ENCODE measurements at regions of chr1 and their contacts with region 1.

Region 1: DNA sequence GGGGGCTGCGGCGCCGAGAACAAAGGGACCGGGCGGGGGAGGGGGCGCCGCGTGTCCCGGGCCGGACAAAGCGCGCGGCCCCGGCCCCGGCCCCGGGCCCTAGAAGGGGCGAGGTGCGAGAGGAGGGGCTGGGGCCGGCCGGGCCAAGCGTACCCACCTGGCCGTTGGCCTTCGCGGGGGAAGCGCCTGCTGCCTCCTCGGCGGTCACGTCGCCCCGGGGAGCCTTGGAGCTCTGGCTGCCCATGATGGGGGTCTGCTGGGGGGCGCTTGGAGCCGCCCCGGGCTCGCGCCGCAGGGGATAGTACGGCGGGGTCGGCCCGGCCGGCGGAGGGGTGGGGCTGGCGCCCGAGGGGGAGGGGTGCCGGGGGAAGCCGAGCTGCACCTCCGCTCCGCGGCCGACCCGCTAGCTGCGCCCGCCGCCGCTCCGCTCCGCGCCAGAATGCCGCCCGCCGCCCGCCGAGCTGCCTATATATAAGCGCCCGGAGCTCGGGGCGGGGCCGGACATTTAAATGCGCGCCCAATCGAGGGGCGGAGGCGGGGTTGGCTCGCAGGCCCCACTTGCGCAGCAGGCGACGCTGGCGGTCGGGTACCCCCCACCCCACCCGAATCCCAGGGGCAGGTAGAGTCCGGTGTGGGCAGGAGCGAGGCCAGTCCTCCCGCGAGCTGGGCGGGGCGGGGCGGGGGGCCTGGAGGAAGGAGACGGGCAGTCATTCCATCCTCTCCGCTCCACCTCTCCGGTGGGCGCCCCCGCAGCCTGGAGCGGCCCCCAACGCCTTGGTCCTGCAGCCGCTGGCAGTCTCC is at the start of gene MARCKSL1:
- DNase-seq: peak; percentile 67 to 91 (median 84)
- ATAC-seq: peak; percentile 60 to 74 (median 72)
- H3K4me3 ChIP-seq: peak within 1 kb of the TSS; percentile 47 to 75
- H3K4me3 Mint-ChIP-seq: peak within 1 kb of the TSS; percentile 83 to 89 (median 86)
- H3K27ac ChIP-seq: peak within 1 kb of the TSS; percentile 41
- H3K27ac Mint-ChIP-seq: peak within 1 kb of the TSS; percentile 84 to 91
- H3K4me1 ChIP-seq: peaks cover 16 to 36% of the 10 kb centered on the region in 2 experiments
- H3K4me1 Mint-ChIP-seq: peaks cover 31 to 43% (median 35%) of the 10 kb centered on the region in 3 donors
- H3K27me3 ChIP-seq: peaks cover 0 to 5% of the 10 kb centered on the region in 2 experiments
- H3K27me3 Mint-ChIP-seq: no peaks in the 10 kb centered on the region
- total RNA-seq, gene MARCKSL1: 28.1 to 46.5 (median 41.4) TPM

Region 2: GRCh38 chr1:31447198-31447597 is 888.8 kb before region 1 on chr1:
- CTCF ChIA-PET with region 1: no interaction called
- POLR2A ChIA-PET with region 1: no interaction called
- DNase-seq: no peak
- ATAC-seq: no peak
- H3K4me3 ChIP-seq: no peak overlapping the region
- H3K4me3 Mint-ChIP-seq: no peak overlapping the region
- H3K27ac ChIP-seq: no peak overlapping the region
- H3K27ac Mint-ChIP-seq: no peak overlapping the region
- H3K4me1 ChIP-seq: no peaks in the 10 kb centered on the region
- H3K4me1 Mint-ChIP-seq: no peaks in the 10 kb centered on the region
- H3K27me3 ChIP-seq: peaks cover 0 to 2% of the 10 kb centered on the region in 2 experiments
- H3K27me3 Mint-ChIP-seq: peaks cover 16 to 18% of the 10 kb centered on the region in 2 donors

Region 3: DNA sequence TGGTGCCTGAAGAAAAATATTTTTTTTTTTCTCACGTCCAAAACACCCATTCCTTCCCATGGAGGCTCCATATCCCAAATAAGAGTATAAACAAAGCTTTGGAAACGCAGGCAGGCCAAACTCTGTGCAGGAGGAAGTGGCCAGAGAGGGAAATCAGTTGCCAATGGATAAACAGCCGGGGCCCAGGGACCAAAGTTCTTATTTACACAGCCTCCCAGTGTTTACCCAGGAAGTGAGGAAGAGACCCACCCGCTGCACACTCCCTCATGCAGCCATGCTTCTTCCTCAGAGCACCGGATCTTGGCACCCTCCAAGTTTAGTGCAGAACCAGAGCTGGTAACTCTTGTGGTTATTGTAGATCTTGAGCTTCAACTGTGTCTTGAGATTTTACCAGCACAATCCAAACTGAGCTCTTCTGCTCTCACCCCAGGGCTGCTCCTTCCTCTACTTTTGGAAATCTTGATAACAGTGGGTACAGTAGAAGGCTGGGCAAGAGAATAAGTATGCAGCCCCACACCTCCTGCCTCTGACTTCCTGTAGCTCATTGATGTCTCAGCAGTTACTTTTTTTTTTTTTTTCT is 14.2 kb before region 1 on chr1:
- CTCF ChIA-PET with region 1: interaction called in 1 of 2 experiments, 9 read pairs
- POLR2A ChIA-PET with region 1: interaction called in 1 of 2 experiments, 12 read pairs
- DNase-seq: peak in 23 of 35 experiments; percentile 8 to 68 (median 29)
- ATAC-seq: peak; percentile 86 to 90 (median 88)
- H3K4me3 ChIP-seq: peak overlapping the region; percentile 10 to 46
- H3K4me3 Mint-ChIP-seq: peak overlapping the region; percentile 64 to 78 (median 67)
- H3K27ac ChIP-seq: peak overlapping the region; percentile 61
- H3K27ac Mint-ChIP-seq: peak overlapping the region; percentile 96
- H3K4me1 ChIP-seq: peaks cover 29 to 58% of the 10 kb centered on the region in 2 experiments
- H3K4me1 Mint-ChIP-seq: peaks cover 44 to 59% (median 44%) of the 10 kb centered on the region in 3 donors
- H3K27me3 ChIP-seq: no peaks in the 10 kb centered on the region
- H3K27me3 Mint-ChIP-seq: no peaks in the 10 kb centered on the region

Region 4: DNA sequence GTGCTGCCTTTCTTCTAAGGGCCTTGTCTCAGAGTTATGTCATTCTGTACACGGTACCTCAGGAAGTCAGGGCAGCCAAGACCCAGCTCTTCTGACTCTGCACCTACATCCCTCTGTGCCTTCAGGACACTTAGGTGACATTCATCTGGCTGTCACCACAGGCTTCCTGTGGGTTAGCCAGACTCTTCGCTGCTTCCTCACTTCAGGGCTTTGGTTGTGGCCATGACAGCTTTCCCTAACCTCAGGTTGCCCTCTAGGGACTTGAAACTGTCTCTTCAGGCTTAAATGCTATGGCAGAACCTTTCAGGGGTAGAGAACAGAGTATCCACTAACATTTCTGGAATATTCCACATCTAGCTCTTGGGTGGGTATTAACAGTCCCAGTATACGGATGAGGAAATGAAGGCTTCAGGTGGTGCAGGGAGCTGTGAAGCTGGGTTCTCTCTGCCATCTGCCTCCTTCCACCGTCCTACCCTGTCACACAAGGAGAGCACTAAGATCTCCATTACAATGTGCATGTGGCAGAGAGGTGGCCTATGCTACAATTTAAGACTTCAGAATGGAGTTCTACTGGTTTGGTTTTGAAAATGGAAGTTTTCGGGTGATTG is 36.3 kb after region 1 on chr1:
- CTCF ChIA-PET with region 1: interaction called, 3 to 9 read pairs
- POLR2A ChIA-PET with region 1: interaction called, 5 to 12 read pairs
- DNase-seq: peak; percentile 26 to 82 (median 50)
- ATAC-seq: peak; percentile 85 to 95 (median 92)
- H3K4me3 ChIP-seq: no peak overlapping the region
- H3K4me3 Mint-ChIP-seq: peak overlapping the region in 1 of 3 donors; percentile 2
- H3K27ac ChIP-seq: no peak overlapping the region
- H3K27ac Mint-ChIP-seq: peak overlapping the region; percentile 60 to 68
- H3K4me1 ChIP-seq: peaks cover 10 to 16% of the 10 kb centered on the region in 2 experiments
- H3K4me1 Mint-ChIP-seq: peaks cover 19 to 27% (median 21%) of the 10 kb centered on the region in 3 donors
- H3K27me3 ChIP-seq: no peaks in the 10 kb centered on the region
- H3K27me3 Mint-ChIP-seq: no peaks in the 10 kb centered on the region

Region 5: GRCh38 chr1:32394141-32394889 is 58.3 kb after region 1 on chr1 and contains the start of gene BSDC1:
- CTCF ChIA-PET with region 1: interaction called in 1 of 2 experiments, 4 read pairs
- POLR2A ChIA-PET with region 1: interaction called, 9 to 10 read pairs
- DNase-seq: peak; percentile 94 to 99 (median 97)
- ATAC-seq: peak; percentile 96 to 100 (median 99)
- H3K4me3 ChIP-seq: peak within 1 kb of the TSS; percentile 78 to 98
- H3K4me3 Mint-ChIP-seq: peak within 1 kb of the TSS; percentile 92 to 99 (median 98)
- H3K27ac ChIP-seq: peak within 1 kb of the TSS; percentile 88
- H3K27ac Mint-ChIP-seq: peak within 1 kb of the TSS; percentile 98 to 99
- H3K4me1 ChIP-seq: peaks cover 14 to 38% of the 10 kb centered on the region in 2 experiments
- H3K4me1 Mint-ChIP-seq: peaks cover 29 to 31% (median 30%) of the 10 kb centered on the region in 3 donors
- H3K27me3 ChIP-seq: no peaks in the 10 kb centered on the region
- H3K27me3 Mint-ChIP-seq: no peaks in the 10 kb centered on the region
- total RNA-seq, gene BSDC1: 93.4 to 190 (median 105) TPM